ENCODE measurements at regions of chr3 and their contacts with region 1.

Region 1: DNA sequence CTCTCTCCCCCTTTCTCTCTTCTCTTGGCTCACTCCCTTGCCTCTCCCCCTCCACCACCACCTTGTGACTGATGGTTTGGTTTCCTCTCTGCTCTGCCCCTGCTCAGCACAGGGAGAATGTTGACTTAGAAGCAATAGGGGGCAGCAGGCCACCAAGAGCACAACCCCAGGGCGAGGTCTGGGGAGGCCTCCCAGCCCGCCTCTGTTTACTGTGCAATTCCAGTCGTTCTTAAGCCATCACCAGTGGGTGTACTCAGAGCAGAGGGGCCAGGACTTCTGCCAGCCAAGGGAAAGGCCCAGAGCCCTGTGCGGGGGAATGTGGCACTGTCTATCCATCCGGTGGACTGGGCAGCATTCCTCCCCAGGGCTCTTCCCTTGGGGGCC is 5.7 kb upstream of the APEH start:
- DNase-seq: peak; percentile 76
- ATAC-seq: peak; percentile 56
- H3K4me3 ChIP-seq: no peak overlapping the region
- H3K27ac ChIP-seq: peak overlapping the region; percentile 80
- H3K4me1 ChIP-seq: peaks cover 92% of the 10 kb centered on the region
- H3K27me3 ChIP-seq: no peaks in the 10 kb centered on the region
- CTCF ChIP-seq: peak; percentile 82
- EP300 ChIP-seq: peak in 1 of 2 experiments; percentile 74; a peak in 2 of 4 replicates
- POLR2A ChIP-seq: no peak
- RAD21 ChIP-seq: peak; percentile 42; the same call in 1 of the 2 replicates

Region 2: DNA sequence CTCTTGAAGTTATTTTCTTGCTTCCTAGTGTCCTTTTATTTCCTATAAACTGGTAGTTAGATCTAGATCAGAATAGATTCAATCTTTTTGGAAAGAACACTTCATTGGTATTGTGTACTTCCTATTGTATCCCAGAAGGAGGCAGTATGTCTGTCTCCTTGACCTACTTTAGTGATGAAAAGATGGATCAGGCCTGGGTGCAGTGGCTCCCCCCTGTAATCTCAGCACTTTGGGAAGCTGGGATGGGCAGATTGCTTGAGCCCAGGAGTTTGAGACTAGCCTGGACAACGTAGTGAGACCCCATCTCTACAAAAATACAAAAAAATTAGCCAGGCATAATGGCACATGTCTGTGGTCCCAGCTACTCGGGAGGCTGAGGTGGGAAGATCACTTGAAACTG is 102.1 kb before region 1 on chr3:
- CTCF ChIA-PET with region 1: interaction called, 10 read pairs
- POLR2A ChIA-PET with region 1: interaction called, 11 read pairs
- in situ Hi-C with region 1: loop called (anchors 10 kb)
- intact Hi-C with region 1: no loop called
- DNase-seq: no peak
- ATAC-seq: no peak
- H3K4me3 ChIP-seq: no peak overlapping the region
- H3K27ac ChIP-seq: no peak overlapping the region
- H3K4me1 ChIP-seq: peaks cover 40% of the 10 kb centered on the region
- H3K27me3 ChIP-seq: no peaks in the 10 kb centered on the region
- CTCF ChIP-seq: peak; percentile 58
- EP300 ChIP-seq: no peak
- POLR2A ChIP-seq: no peak
- RAD21 ChIP-seq: no peak

Region 3: DNA sequence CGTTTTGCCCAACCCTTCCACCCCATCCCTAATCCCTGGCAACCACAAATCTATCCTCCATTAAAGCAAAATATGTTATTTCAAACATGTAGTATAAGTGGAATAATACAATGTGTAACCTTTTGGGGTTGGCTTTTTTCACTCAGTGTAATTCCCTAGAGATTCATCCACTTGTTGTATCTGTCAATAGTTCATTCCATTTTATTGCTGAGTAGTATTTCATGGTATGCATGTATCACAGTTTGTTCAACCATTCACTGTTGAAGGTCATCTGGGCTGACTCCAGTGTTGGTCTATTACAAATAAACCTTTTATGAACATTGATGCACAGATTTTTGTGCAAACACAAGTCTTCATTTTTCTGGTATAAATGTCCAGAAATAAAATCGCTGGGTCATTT is 75.4 kb before region 1 on chr3:
- CTCF ChIA-PET with region 1: no interaction called
- POLR2A ChIA-PET with region 1: interaction called, 10 read pairs
- in situ Hi-C with region 1: no loop called
- intact Hi-C with region 1: loop called (anchors 5 kb)
- DNase-seq: no peak
- ATAC-seq: no peak
- H3K4me3 ChIP-seq: no peak overlapping the region
- H3K27ac ChIP-seq: no peak overlapping the region
- H3K4me1 ChIP-seq: peaks cover 12% of the 10 kb centered on the region; the same call in 1 of the 2 replicates
- H3K27me3 ChIP-seq: no peaks in the 10 kb centered on the region
- CTCF ChIP-seq: no peak
- EP300 ChIP-seq: no peak
- POLR2A ChIP-seq: no peak
- RAD21 ChIP-seq: no peak

Measured in HepG2 (cell line).